ENCODE measurements at regions of chr1 and their contacts with region 1.

Region 1: GRCh38 chr1:10941891-10942541 is 70.4 kb upstream of the TARDBP start:
- DNase-seq: peak; percentile 42
- H3K4me3 Mint-ChIP-seq: no peak overlapping the region
- H3K27ac Mint-ChIP-seq: no peak overlapping the region
- H3K4me1 Mint-ChIP-seq: peaks cover 31% of the 10 kb centered on the region
- H3K27me3 Mint-ChIP-seq: peaks cover 56% of the 10 kb centered on the region

Region 2: DNA sequence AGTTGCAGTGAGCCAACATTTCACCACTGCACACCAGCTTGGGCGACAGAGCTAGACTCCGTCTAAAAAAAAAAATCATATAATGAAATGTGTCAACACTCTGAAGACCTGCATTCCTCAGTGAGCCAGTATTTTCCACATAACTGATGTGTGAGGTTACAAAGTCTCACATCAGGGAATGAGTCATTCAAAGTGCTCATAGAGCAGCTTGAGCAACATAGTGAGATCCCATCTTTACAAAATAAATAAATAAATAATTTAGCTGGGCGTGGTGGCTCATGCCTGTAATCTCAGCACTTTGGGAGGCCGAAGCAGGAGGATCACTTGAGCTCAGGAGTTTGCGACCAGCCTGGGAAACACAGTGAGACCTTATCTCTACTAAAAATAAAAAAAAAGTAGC is 211.0 kb before region 1 on chr1:
- intact Hi-C with region 1: loop called (anchors 1 kb)
- DNase-seq: no peak
- H3K4me3 Mint-ChIP-seq: no peak overlapping the region
- H3K27ac Mint-ChIP-seq: no peak overlapping the region
- H3K4me1 Mint-ChIP-seq: peaks cover 6% of the 10 kb centered on the region
- H3K27me3 Mint-ChIP-seq: peaks cover 13% of the 10 kb centered on the region

Region 3: DNA sequence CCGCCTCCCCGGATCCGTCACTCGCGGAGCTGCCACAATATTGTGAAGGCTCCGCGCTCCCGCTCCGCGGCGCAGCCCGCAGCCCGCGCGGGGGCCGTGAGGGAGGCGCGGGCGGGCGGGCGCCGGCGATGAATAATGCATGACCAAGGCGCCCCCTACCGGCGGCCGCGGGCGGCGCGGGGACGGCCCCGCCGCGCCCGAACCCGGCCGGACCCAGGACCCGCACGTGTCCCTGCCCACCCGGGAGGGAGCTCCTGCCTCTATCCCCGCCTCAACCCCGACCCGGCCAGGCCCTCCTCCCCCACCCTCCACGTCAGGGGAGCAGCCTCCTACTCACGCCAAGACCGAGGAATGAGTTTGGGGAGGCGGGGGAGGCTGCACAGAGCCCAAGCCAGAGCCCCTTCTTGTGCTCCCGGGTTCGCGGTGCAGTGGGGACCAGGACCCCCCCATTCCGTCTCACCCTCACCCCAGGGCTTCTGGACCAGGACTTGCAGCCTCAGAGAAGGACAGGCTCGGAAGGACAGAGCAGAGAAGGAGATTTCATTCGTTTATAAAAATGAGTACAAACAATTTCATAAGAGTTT is 74.8 kb before region 1 on chr1:
- intact Hi-C with region 1: loop called (anchors 5 kb)
- DNase-seq: peak; percentile 48
- H3K4me3 Mint-ChIP-seq: peak overlapping the region; percentile 35
- H3K27ac Mint-ChIP-seq: no peak overlapping the region
- H3K4me1 Mint-ChIP-seq: peaks cover 5% of the 10 kb centered on the region
- H3K27me3 Mint-ChIP-seq: peaks cover 67% of the 10 kb centered on the region